ENCODE measurements at regions of chr14 and their contacts with region 1.

Region 1: GRCh38 chr14:100645192-100645990 is 58.2 kb upstream of the BEGAIN start:
- DNase-seq: peak; percentile 68
- H3K4me3 ChIP-seq: no peak overlapping the region
- H3K27ac ChIP-seq: no peak overlapping the region
- H3K4me1 ChIP-seq: peaks cover 14% of the 10 kb centered on the region
- H3K27me3 ChIP-seq: peaks cover under 1 to 4% of the 10 kb centered on the region in 2 experiments
- CTCF ChIP-seq: peak; percentile 72 to 83
- POLR2A ChIP-seq: no peak

Region 2: GRCh38 chr14:100392356-100392755 is 253.0 kb before region 1 on chr14:
- CTCF ChIA-PET with region 1: interaction called, 326 read pairs
- POLR2A ChIA-PET with region 1: no interaction called
- dilution Hi-C with region 1: no loop called
- intact Hi-C with region 1: no loop called
- DNase-seq: no peak
- H3K4me3 ChIP-seq: no peak overlapping the region
- H3K27ac ChIP-seq: no peak overlapping the region
- H3K4me1 ChIP-seq: peaks cover 10% of the 10 kb centered on the region
- H3K27me3 ChIP-seq: no peaks in the 10 kb centered on the region
- CTCF ChIP-seq: no peak
- POLR2A ChIP-seq: no peak

Region 3: GRCh38 chr14:100417466-100417865 is 227.9 kb before region 1 on chr14:
- CTCF ChIA-PET with region 1: interaction called, 116 read pairs
- POLR2A ChIA-PET with region 1: no interaction called
- dilution Hi-C with region 1: loop called (anchors 25 kb)
- intact Hi-C with region 1: loop called (anchors 1 kb)
- DNase-seq: peak; percentile 88
- H3K4me3 ChIP-seq: no peak overlapping the region
- H3K27ac ChIP-seq: no peak overlapping the region
- H3K4me1 ChIP-seq: no peaks in the 10 kb centered on the region
- H3K27me3 ChIP-seq: no peaks in the 10 kb centered on the region
- CTCF ChIP-seq: peak; percentile 72 to 82
- POLR2A ChIP-seq: no peak

Region 4: GRCh38 chr14:100524933-100525243 is 120.5 kb before region 1 on chr14:
- CTCF ChIA-PET with region 1: interaction called, 40 read pairs
- POLR2A ChIA-PET with region 1: no interaction called
- dilution Hi-C with region 1: no loop called
- intact Hi-C with region 1: loop called (anchors 1 kb)
- DNase-seq: no peak
- H3K4me3 ChIP-seq: no peak overlapping the region
- H3K27ac ChIP-seq: no peak overlapping the region
- H3K4me1 ChIP-seq: no peaks in the 10 kb centered on the region
- H3K27me3 ChIP-seq: no peaks in the 10 kb centered on the region
- CTCF ChIP-seq: peak; percentile 13 to 41
- POLR2A ChIP-seq: no peak

Region 5: DNA sequence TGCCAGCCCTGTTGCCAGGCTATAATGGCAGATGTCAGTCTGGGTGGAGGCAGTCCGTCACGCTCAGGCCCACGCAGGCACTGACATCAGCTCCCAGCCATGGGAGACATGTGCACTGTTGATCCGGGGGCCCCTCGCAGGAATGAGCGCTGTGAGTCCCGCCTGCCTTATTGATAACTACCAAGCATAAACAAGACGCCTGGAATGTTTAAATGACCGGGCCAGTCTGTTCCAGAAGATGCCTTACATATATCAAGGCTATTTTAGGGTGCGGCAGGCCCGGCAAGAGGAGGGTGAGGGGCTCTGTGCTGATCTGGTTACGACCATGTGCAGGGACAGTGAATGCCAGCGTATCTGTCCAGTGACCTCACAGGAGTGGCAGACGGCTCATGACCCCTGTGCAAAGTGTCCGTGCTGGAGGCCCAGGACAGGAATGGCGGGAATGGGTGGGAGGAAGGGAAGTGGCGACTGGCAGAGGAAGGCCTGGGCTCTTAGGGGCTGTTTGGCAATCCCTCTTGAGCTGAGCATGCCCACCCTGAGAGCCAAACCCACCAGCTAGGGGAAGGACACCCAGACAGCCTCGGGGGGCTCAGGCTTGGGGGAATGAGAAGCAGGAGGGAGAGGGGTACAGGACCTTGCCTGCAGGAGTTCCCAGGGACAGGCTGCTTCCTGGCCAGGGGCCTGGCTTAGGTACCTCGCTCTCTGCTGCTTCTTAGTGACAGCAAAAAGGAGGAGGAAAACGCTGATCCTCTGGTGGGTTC is 130.6 kb after region 1 on chr14:
- CTCF ChIA-PET with region 1: no interaction called
- POLR2A ChIA-PET with region 1: no interaction called
- dilution Hi-C with region 1: no loop called
- intact Hi-C with region 1: no loop called
- DNase-seq: no peak
- H3K4me3 ChIP-seq: no peak overlapping the region
- H3K27ac ChIP-seq: no peak overlapping the region
- H3K4me1 ChIP-seq: no peaks in the 10 kb centered on the region
- H3K27me3 ChIP-seq: no peaks in the 10 kb centered on the region
- CTCF ChIP-seq: no peak
- POLR2A ChIP-seq: no peak

Region 6: GRCh38 chr14:101628471-101628966 is 983.1 kb after region 1 on chr14:
- CTCF ChIA-PET with region 1: interaction called, 3 read pairs
- POLR2A ChIA-PET with region 1: no interaction called
- dilution Hi-C with region 1: no loop called
- intact Hi-C with region 1: loop called (anchors 5 kb)
- DNase-seq: peak; percentile 59
- H3K4me3 ChIP-seq: no peak overlapping the region
- H3K27ac ChIP-seq: no peak overlapping the region
- H3K4me1 ChIP-seq: peaks cover 2% of the 10 kb centered on the region
- H3K27me3 ChIP-seq: no peaks in the 10 kb centered on the region
- CTCF ChIP-seq: peak; percentile 93 to 95
- POLR2A ChIP-seq: no peak

Measured in endothelial cell of umbilical vein (primary cell).